A549 (cell line): ENCODE measurements at regions of chr15 and their contacts with region 1.

Region 1: DNA sequence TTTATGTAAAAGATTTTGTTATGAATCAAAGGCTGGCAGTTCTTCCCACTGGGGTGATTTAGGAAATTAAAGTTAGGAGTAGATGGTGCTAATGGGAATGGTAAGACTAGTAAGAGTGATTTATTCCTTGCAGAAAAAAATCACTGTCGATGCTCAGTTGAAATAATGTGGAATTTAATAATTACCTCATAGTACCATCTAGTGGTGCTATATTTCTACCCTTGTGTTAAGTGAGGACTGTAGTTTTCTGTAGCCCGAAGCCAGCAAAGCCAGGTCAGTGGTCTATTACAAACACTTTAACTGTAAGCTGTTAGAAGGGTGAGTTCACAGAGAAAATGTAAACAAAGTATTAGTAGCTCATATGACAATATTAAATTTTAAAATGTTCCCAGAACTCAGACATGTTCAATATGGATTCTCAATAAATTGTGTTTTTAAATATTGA is 39.5 kb upstream of the GOLGA8J start:
- DNase-seq: peak; percentile 37 to 40
- ATAC-seq: peak; percentile 76 to 85; a peak in 5 of 6 replicates
- H3K4me3 ChIP-seq: no peak overlapping the region
- H3K27ac ChIP-seq: no peak overlapping the region
- H3K4me1 ChIP-seq: peaks cover 17% of the 10 kb centered on the region; the same call in 2 of the 3 replicates
- CTCF ChIP-seq: peak; percentile 75
- EP300 ChIP-seq: no peak
- POLR2A ChIP-seq: no peak
- RAD21 ChIP-seq: peak; percentile 77 to 86

Region 2: DNA sequence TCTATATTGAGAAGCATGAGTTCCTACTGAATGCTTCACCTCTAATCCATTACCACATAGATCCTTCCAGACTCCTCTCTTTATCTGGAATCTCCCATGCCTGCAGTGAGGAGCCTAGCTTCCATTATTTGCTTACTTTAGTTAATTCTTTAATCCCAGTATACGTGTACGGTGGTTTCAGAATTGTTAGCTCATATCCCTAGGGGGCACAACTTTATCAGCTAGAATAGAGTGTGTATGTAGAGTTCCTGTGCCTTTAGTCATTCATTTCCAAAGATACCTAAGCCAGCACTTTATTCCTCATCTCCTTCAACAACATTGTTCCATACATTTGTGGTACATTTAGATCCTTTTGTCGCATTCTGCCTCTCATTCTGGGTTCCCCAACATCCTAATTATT is 447.0 kb before region 1 on chr15:
- CTCF ChIA-PET with region 1: no interaction called
- POLR2A ChIA-PET with region 1: no interaction called
- DNase-seq: no peak
- ATAC-seq: no peak
- H3K4me3 ChIP-seq: no peak overlapping the region
- H3K27ac ChIP-seq: no peak overlapping the region
- H3K4me1 ChIP-seq: no peaks in the 10 kb centered on the region
- CTCF ChIP-seq: no peak
- EP300 ChIP-seq: no peak
- POLR2A ChIP-seq: no peak
- RAD21 ChIP-seq: no peak

Region 3: GRCh38 chr15:29613951-29614382 is 429.3 kb before region 1 on chr15:
- CTCF ChIA-PET with region 1: interaction called, 11 read pairs
- POLR2A ChIA-PET with region 1: no interaction called
- DNase-seq: peak; percentile 78 to 87
- ATAC-seq: peak; percentile 95 to 98
- H3K4me3 ChIP-seq: no peak overlapping the region
- H3K27ac ChIP-seq: peak overlapping the region in 1 of 2 experiments; percentile 27; a peak in 1 of 6 replicates
- H3K4me1 ChIP-seq: peaks cover 9% of the 10 kb centered on the region; the same call in 2 of the 3 replicates
- CTCF ChIP-seq: peak; percentile 72
- EP300 ChIP-seq: no peak
- POLR2A ChIP-seq: no peak
- RAD21 ChIP-seq: peak; percentile 81 to 86

Region 4: GRCh38 chr15:29698030-29698701 is 345.1 kb before region 1 on chr15:
- CTCF ChIA-PET with region 1: interaction called, 12 read pairs
- POLR2A ChIA-PET with region 1: no interaction called
- DNase-seq: peak; percentile 86 to 96
- ATAC-seq: peak; percentile 92 to 95
- H3K4me3 ChIP-seq: no peak overlapping the region
- H3K27ac ChIP-seq: peak overlapping the region; percentile 76 to 88
- H3K4me1 ChIP-seq: peaks cover 78% of the 10 kb centered on the region
- CTCF ChIP-seq: no peak
- EP300 ChIP-seq: peak; percentile 68 to 79; a peak in 3 of 5 replicates
- POLR2A ChIP-seq: no peak
- RAD21 ChIP-seq: peak; percentile 17 to 42; a peak in 3 of 5 replicates

Region 5: GRCh38 chr15:30023798-30024295 is 19.4 kb before region 1 on chr15:
- CTCF ChIA-PET with region 1: interaction called, 12 read pairs
- POLR2A ChIA-PET with region 1: no interaction called
- DNase-seq: no peak
- ATAC-seq: no peak
- H3K4me3 ChIP-seq: no peak overlapping the region
- H3K27ac ChIP-seq: no peak overlapping the region
- H3K4me1 ChIP-seq: no peaks in the 10 kb centered on the region; the same call in 2 of the 3 replicates
- CTCF ChIP-seq: no peak
- EP300 ChIP-seq: no peak
- POLR2A ChIP-seq: no peak
- RAD21 ChIP-seq: no peak

Region 6: GRCh38 chr15:30065025-30065801 is 22.0 kb after region 1 on chr15:
- CTCF ChIA-PET with region 1: interaction called, 11 read pairs
- POLR2A ChIA-PET with region 1: no interaction called
- DNase-seq: no peak
- ATAC-seq: no peak
- H3K4me3 ChIP-seq: no peak overlapping the region
- H3K27ac ChIP-seq: peak overlapping the region; percentile 15 to 27; a peak in 2 of 6 replicates
- H3K4me1 ChIP-seq: peaks cover 17% of the 10 kb centered on the region
- CTCF ChIP-seq: no peak
- EP300 ChIP-seq: no peak
- POLR2A ChIP-seq: no peak
- RAD21 ChIP-seq: no peak